Psoas muscle (tissue), 8 donors: ENCODE measurements at regions of chr11 and their contacts with region 1.

Region 1: DNA sequence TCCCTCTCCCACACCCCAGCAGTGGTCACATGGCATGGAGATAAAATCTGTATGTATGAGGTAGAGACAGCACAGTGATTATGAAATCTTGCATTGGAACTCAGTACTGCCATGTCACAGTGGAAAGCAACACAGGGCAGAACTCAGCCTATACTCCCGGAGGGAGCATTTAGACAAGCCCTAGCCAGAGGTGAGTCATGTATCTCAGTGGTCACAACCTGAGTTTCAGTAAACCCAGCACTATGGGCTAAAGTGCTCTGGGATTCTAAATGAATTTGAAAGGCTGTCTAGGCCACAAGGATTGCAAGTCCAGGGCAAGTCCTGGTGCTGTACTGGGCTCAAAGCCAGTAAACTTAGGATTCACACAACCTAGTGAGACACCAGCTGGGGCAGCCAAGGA is 1717.1 kb upstream of the RAG2 start:
- DNase-seq: no peak
- ATAC-seq: no peak
- H3K4me3 ChIP-seq: no peak overlapping the region
- H3K27ac ChIP-seq: no peak overlapping the region
- H3K4me1 ChIP-seq: no peaks in the 10 kb centered on the region
- H3K27me3 ChIP-seq: no peaks in the 10 kb centered on the region
- CTCF ChIP-seq: no peak

Region 2: GRCh38 chr11:38252620-38253019 is 62.5 kb before region 1 on chr11:
- intact Hi-C with region 1: no loop called
- DNase-seq: no peak
- ATAC-seq: no peak
- H3K4me3 ChIP-seq: no peak overlapping the region
- H3K27ac ChIP-seq: no peak overlapping the region
- H3K4me1 ChIP-seq: no peaks in the 10 kb centered on the region
- H3K27me3 ChIP-seq: no peaks in the 10 kb centered on the region
- CTCF ChIP-seq: no peak

Region 3: DNA sequence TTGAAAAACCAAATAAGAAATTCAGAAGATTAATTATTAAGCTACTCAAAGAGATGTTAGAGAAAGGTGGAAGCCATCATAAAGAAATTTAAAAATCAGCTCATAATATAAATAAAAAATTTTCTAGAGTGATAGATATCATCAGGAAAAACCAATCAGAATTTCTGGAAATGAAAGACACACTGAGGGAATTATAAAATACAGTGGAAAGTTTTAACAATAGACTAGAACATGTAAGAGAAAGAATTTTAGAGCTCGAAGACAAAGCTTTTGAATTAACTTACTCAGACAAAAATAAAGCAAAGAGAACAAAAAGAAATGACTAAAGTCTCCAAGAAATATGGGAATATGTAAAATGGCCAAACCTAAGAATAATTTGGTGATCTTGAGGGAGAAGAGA is 209.8 kb after region 1 on chr11:
- intact Hi-C with region 1: loop called in 1 of 2 experiments (anchors 5 kb)
- DNase-seq: no peak
- ATAC-seq: no peak
- H3K4me3 ChIP-seq: no peak overlapping the region
- H3K27ac ChIP-seq: no peak overlapping the region
- H3K4me1 ChIP-seq: no peaks in the 10 kb centered on the region
- H3K27me3 ChIP-seq: no peaks in the 10 kb centered on the region
- CTCF ChIP-seq: no peak